ENCODE measurements at regions of chr20 and their contacts with region 1.

Region 1: DNA sequence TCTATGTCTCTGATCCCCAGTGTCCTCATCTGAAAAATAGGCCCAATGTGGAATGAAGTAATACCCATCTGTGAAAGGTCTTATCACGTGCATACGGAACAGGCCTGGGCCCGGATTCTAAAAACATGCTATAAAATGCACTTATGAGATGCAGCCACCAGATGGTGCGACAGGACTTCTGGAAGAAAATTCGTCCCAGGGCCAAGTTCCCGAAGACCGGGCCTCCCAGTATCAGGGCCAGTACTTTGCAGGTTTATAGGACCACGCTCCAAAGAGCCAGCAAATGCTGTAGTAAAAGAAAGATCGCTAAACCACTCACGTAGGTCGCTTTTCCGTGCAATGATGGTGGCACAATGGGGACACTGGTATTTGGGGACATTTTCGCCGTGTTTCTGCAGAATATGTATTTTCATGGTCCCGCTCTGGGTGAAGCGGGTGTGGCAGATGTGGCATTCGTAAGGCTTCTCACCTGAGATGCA is 10.6 kb downstream of the CTCFL start:
- DNase-seq: peak in 2 of 3 donors; percentile 72 to 85
- ATAC-seq: peak; percentile 89
- H3K4me3 ChIP-seq: no peak overlapping the region
- H3K4me1 ChIP-seq: peaks cover 5% of the 10 kb centered on the region
- CTCF ChIP-seq: peak; percentile 50

Region 2: GRCh38 chr20:56752279-56752833 is 762.0 kb before region 1 on chr20:
- intact Hi-C with region 1: no loop called
- DNase-seq: no peak
- ATAC-seq: no peak
- H3K4me3 ChIP-seq: no peak overlapping the region
- H3K4me1 ChIP-seq: no peaks in the 10 kb centered on the region
- CTCF ChIP-seq: no peak

Region 3: GRCh38 chr20:57473246-57474048 is 40.9 kb before region 1 on chr20:
- intact Hi-C with region 1: no loop called
- DNase-seq: peak in 1 of 3 donors; percentile 60
- ATAC-seq: peak; percentile 69
- H3K4me3 ChIP-seq: no peak overlapping the region
- H3K4me1 ChIP-seq: no peaks in the 10 kb centered on the region
- CTCF ChIP-seq: no peak

Region 4: DNA sequence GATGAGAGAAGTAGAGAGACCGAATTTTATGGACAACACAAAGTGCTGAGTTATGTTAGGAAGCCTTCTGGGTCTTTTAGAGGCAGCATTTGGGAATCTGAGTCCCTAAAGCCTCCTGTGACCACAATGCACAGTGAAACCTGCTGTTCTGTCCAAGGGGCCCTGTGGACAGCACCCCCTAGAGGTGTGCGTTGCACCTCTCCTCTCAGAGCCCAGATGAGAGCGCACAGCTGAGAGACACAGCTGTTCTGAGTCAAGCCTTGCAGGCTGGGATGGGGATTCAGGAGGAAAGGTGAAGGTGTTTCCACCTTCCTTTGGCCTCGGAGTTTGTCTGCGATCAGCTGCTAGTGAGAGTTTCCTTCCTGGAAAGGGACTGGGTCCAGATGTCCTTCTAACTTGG is 59.6 kb after region 1 on chr20:
- intact Hi-C with region 1: no loop called
- DNase-seq: peak in 1 of 3 donors; percentile 26
- ATAC-seq: no peak
- H3K4me3 ChIP-seq: no peak overlapping the region
- H3K4me1 ChIP-seq: peaks cover 10% of the 10 kb centered on the region
- CTCF ChIP-seq: no peak

Region 5: DNA sequence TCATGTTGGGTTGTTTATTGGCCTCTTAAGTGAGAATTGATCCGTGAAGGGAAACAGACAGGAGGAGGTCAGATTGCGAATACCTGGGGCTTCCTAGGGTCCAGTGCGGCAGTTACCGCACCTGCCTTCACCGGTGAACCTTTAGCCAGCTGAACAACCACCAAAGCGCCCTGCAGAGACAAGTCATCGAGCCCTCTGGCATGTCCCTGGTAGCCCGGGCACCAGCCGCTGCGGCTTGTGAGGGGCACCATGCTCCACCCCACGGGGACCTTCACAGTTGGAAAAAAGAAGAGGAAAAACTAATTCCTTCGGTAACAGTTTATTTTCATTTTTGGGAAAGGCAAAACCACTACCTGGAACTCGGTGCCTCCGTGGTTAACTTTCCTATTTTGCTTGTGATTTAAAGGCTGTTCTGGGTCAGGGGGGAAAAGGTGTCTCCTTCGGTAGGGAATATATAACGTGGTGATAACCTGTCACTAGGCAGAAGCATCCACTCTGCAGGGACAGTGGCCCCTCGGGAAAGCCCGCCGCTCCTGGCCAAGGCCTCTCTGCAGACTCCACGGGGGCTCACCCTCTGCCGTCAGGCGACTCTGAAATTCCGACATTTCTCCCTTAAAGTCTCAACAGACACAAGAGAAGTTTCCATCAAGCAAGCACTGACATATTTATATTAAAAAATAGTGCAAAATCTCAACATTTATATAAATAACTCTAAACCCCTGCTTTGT is 136.6 kb after region 1 on chr20:
- intact Hi-C with region 1: no loop called
- DNase-seq: no peak
- ATAC-seq: no peak
- H3K4me3 ChIP-seq: no peak overlapping the region
- H3K4me1 ChIP-seq: no peaks in the 10 kb centered on the region
- CTCF ChIP-seq: no peak

Region 6: GRCh38 chr20:58209652-58210397 is 695.5 kb after region 1 on chr20:
- intact Hi-C with region 1: loop called (anchors 5 to 10 kb)
- DNase-seq: peak; percentile 84 to 92 (median 90)
- ATAC-seq: peak; percentile 98
- H3K4me3 ChIP-seq: no peak overlapping the region
- H3K4me1 ChIP-seq: no peaks in the 10 kb centered on the region
- CTCF ChIP-seq: peak; percentile 100

Region 7: GRCh38 chr20:58219301-58219700 is 705.0 kb after region 1 on chr20:
- intact Hi-C with region 1: loop called (anchors 5 to 10 kb)
- DNase-seq: no peak
- ATAC-seq: no peak
- H3K4me3 ChIP-seq: no peak overlapping the region
- H3K4me1 ChIP-seq: no peaks in the 10 kb centered on the region
- CTCF ChIP-seq: no peak

Measured in mucosa of descending colon (tissue), 3 donors.